CD4-positive, alpha-beta T cell (primary cell): ENCODE measurements at regions of chr9 and their contacts with region 1.

Region 1: GRCh38 chr9:114405294-114406034 is 17.7 kb upstream of the AKNA start:
- DNase-seq: peak; percentile 69 to 91 (median 75)
- ATAC-seq: peak; percentile 100
- H3K4me3 ChIP-seq: no peak overlapping the region
- H3K4me3 Mint-ChIP-seq: peak overlapping the region; percentile 30
- H3K27ac ChIP-seq: no peak overlapping the region
- H3K27ac Mint-ChIP-seq: peak overlapping the region; percentile 6
- H3K4me1 ChIP-seq: peaks cover 11% of the 10 kb centered on the region
- H3K4me1 Mint-ChIP-seq: peaks cover 7% of the 10 kb centered on the region
- H3K27me3 ChIP-seq: no peaks in the 10 kb centered on the region
- H3K27me3 Mint-ChIP-seq: no peaks in the 10 kb centered on the region
- CTCF ChIP-seq: peak; percentile 90

Region 2: DNA sequence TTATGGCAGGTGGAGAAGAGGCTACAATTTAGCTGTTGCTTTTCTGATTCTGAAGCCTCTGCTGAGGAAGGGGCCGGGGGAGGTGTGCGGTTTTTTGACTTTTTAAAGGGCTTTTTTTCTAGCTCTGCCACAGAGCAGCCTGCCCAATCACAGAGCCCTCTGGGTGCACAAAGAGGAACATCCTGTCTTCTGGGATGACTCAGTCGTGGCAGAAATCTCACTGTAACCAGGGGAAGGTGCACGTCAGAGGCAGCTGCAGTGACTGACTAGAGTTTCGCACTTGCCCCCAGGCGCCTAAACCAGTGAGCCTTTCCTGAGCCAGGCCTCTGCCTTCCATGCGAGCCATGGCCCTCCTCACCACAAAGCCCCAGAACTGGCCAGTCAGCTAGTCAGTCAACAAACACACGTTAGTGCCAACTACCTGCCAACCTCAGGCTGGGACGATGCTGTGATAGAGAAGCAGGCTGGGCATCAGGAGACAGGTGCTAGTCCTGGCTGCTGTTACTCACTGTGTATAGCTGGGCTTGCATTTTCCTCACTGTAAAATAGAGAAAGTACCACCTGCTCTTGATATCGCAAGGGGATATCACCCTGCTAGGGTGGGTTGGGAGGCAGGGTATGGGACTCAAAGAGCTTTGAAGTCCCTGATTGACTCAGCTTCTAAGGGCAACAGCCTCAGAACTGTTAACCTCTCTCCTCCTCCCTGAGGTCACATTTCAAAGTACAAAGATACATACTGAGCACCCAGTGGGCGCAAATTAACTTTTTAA is 19.9 kb before region 1 on chr9:
- CTCF ChIA-PET with region 1: interaction called, 24 read pairs
- POLR2A ChIA-PET with region 1: interaction called, 14 read pairs
- intact Hi-C with region 1: no loop called
- DNase-seq: peak; percentile 74 to 97 (median 82)
- ATAC-seq: peak; percentile 78
- H3K4me3 ChIP-seq: peak overlapping the region; percentile 99
- H3K4me3 Mint-ChIP-seq: peak overlapping the region; percentile 95
- H3K27ac ChIP-seq: peak overlapping the region; percentile 71 to 97
- H3K27ac Mint-ChIP-seq: peak overlapping the region; percentile 98
- H3K4me1 ChIP-seq: peaks cover 85% of the 10 kb centered on the region
- H3K4me1 Mint-ChIP-seq: peaks cover 80% of the 10 kb centered on the region
- H3K27me3 ChIP-seq: no peaks in the 10 kb centered on the region
- H3K27me3 Mint-ChIP-seq: no peaks in the 10 kb centered on the region
- CTCF ChIP-seq: no peak

Region 3: DNA sequence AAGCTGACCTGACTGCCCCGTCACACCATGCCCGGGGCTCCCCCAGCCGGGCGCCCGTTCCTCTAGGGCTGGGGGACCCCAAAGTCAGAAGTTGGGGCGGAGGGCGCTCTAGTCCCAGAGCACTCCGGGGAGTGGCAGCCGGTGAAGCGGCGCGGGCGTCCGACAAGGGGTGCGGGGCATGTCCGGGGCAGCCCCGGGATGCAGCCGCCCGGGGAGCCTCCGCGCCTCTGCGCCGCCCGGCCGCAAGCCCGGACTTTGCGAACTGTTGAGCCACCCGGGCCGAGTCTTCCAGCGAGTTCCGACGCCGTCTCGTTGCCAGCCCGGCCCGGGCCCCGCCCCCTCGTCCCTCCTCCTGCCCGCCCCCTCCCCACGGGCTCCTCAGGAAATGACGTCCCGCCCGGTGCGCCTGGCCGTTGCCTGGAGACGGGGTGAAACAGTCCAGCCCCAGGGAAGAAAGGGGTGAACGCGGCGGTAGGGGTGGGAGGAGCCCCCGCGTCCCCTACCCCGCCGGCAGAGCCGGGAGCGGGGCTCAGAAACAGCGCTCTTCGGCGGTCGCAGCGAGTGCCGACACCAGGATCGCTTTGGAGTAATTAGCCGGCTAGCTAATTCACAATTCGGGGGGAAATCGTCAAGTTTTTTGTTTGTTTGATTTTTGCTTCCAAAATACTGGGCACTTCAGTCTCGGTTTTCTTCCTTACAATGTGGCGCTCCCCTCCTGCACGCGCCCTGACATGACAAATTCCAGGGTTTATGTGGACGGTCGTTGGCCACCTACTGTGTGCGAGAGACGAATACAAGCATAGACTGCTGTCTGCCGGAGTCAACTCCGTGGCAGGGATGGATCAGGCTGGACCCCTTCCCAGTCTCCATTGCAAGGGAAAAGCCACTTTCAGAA is 100.0 kb after region 1 on chr9 and contains the start of gene WHRN:
- CTCF ChIA-PET with region 1: interaction called, 24 read pairs
- POLR2A ChIA-PET with region 1: no interaction called
- intact Hi-C with region 1: loop called (anchors 1 kb)
- DNase-seq: peak; percentile 79 to 97 (median 88)
- ATAC-seq: peak; percentile 86
- H3K4me3 ChIP-seq: peak within 1 kb of the TSS; percentile 67
- H3K4me3 Mint-ChIP-seq: peak within 1 kb of the TSS; percentile 89
- H3K27ac ChIP-seq: peak within 1 kb of the TSS in 1 of 2 donors; percentile 46
- H3K27ac Mint-ChIP-seq: peak within 1 kb of the TSS; percentile 80
- H3K4me1 ChIP-seq: peaks cover 34% of the 10 kb centered on the region
- H3K4me1 Mint-ChIP-seq: peaks cover 37% of the 10 kb centered on the region
- H3K27me3 ChIP-seq: peaks cover 2 to 5% of the 10 kb centered on the region in 2 experiments
- H3K27me3 Mint-ChIP-seq: peaks cover 30% of the 10 kb centered on the region
- CTCF ChIP-seq: no peak
- total RNA-seq, gene WHRN: 19.9 to 20.5 TPM

Region 4: GRCh38 chr9:114738581-114739316 is 333.3 kb after region 1 on chr9:
- CTCF ChIA-PET with region 1: interaction called, 3 read pairs
- POLR2A ChIA-PET with region 1: no interaction called
- intact Hi-C with region 1: loop called in 1 of 2 experiments (anchors 5 kb)
- DNase-seq: peak; percentile 53 to 89 (median 64)
- ATAC-seq: peak; percentile 88
- H3K4me3 ChIP-seq: no peak overlapping the region
- H3K4me3 Mint-ChIP-seq: peak overlapping the region; percentile 18
- H3K27ac ChIP-seq: no peak overlapping the region
- H3K27ac Mint-ChIP-seq: peak overlapping the region; percentile 85
- H3K4me1 ChIP-seq: peaks cover 40% of the 10 kb centered on the region
- H3K4me1 Mint-ChIP-seq: peaks cover 39% of the 10 kb centered on the region
- H3K27me3 ChIP-seq: no peaks in the 10 kb centered on the region
- H3K27me3 Mint-ChIP-seq: no peaks in the 10 kb centered on the region
- CTCF ChIP-seq: peak; percentile 88

Region 5: GRCh38 chr9:115013998-115014397 is 608.5 kb after region 1 on chr9:
- CTCF ChIA-PET with region 1: interaction called, 3 read pairs
- POLR2A ChIA-PET with region 1: no interaction called
- intact Hi-C with region 1: loop called (anchors 1 to 2 kb)
- DNase-seq: peak; percentile 68 to 89 (median 74)
- ATAC-seq: peak; percentile 82
- H3K4me3 ChIP-seq: no peak overlapping the region
- H3K4me3 Mint-ChIP-seq: no peak overlapping the region
- H3K27ac ChIP-seq: no peak overlapping the region
- H3K27ac Mint-ChIP-seq: no peak overlapping the region
- H3K4me1 ChIP-seq: peaks cover 9% of the 10 kb centered on the region
- H3K4me1 Mint-ChIP-seq: peaks cover 13% of the 10 kb centered on the region
- H3K27me3 ChIP-seq: no peaks in the 10 kb centered on the region
- H3K27me3 Mint-ChIP-seq: no peaks in the 10 kb centered on the region
- CTCF ChIP-seq: peak; percentile 82